Activated B cell treated with CpG ODN at 0.5 μM for 24 hours (primary cell): ENCODE measurements at regions of chr14 and their contacts with region 1.

Region 1: GRCh38 chr14:24036169-24036962 is 15.4 kb upstream of the CARMIL3 start:
- DNase-seq: peak; percentile 50
- ATAC-seq: peak; percentile 76
- H3K4me3 Mint-ChIP-seq: peak overlapping the region; percentile 89
- H3K27ac Mint-ChIP-seq: peak overlapping the region; percentile 62
- H3K4me1 Mint-ChIP-seq: peaks cover 7% of the 10 kb centered on the region
- H3K27me3 Mint-ChIP-seq: no peaks in the 10 kb centered on the region
- CTCF ChIP-seq: no peak

Region 2: DNA sequence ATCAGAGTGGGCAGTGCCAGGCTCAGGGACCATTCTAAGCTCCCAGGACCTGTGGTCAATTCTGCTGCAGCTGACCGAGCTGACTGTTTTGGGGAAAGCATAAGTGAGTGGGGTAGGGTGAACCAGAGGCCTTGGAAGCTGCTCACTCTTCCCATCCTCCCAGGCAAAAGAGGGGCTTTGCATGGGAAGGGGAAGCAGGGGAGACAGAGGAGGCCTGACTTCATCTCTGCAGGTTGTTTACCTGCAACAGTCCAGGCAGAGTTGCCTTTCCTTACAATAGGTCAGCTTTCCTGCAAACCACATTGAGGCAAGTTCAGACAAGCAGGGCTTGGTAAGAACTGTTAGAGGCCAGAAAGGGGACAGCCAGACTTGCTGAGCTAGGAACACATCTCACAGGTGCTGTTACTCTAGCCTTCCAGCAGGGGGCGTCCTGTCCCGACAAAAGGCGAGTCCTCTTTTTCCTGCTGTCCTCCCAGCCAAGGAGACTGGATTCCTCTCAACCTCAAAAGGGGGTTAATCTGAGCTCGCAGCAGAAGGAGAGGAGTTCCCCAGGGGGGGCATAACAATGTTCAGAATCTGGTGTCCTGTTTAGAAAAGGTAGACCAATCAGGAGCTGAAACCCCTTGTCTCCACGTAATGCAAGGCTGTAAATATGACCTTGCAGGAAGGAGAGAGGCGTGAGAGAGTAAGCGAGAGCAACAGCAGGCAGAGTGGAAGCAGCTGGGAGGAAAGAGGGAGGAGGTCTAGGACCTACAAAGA is 404.5 kb before region 1 on chr14:
- CTCF ChIA-PET with region 1: interaction called, 3 read pairs
- POLR2A ChIA-PET with region 1: no interaction called
- intact Hi-C with region 1: loop called (anchors 2 kb)
- DNase-seq: peak; percentile 47
- ATAC-seq: peak; percentile 52
- H3K4me3 Mint-ChIP-seq: no peak overlapping the region
- H3K27ac Mint-ChIP-seq: no peak overlapping the region
- H3K4me1 Mint-ChIP-seq: peaks cover 4% of the 10 kb centered on the region
- H3K27me3 Mint-ChIP-seq: peaks cover 9% of the 10 kb centered on the region
- CTCF ChIP-seq: peak; percentile 92

Region 3: GRCh38 chr14:23953464-23954278 is 82.7 kb before region 1 on chr14 and contains the start of gene DHRS4:
- CTCF ChIA-PET with region 1: no interaction called
- POLR2A ChIA-PET with region 1: no interaction called
- intact Hi-C with region 1: no loop called
- DNase-seq: peak; percentile 69
- ATAC-seq: peak; percentile 95
- H3K4me3 Mint-ChIP-seq: peak within 1 kb of the TSS; percentile 97
- H3K27ac Mint-ChIP-seq: peak within 1 kb of the TSS; percentile 88
- H3K4me1 Mint-ChIP-seq: peaks cover 28% of the 10 kb centered on the region
- H3K27me3 Mint-ChIP-seq: no peaks in the 10 kb centered on the region
- CTCF ChIP-seq: peak; percentile 62
- total RNA-seq, gene DHRS4: 15.8 and 16.1 TPM in 2 replicates

Region 4: GRCh38 chr14:23984891-23985602 is 51.3 kb before region 1 on chr14:
- CTCF ChIA-PET with region 1: no interaction called
- POLR2A ChIA-PET with region 1: no interaction called
- intact Hi-C with region 1: loop called (anchors 5 kb)
- DNase-seq: no peak
- ATAC-seq: no peak
- H3K4me3 Mint-ChIP-seq: no peak overlapping the region
- H3K27ac Mint-ChIP-seq: no peak overlapping the region
- H3K4me1 Mint-ChIP-seq: peaks cover 24% of the 10 kb centered on the region
- H3K27me3 Mint-ChIP-seq: no peaks in the 10 kb centered on the region
- CTCF ChIP-seq: no peak

Region 5: GRCh38 chr14:24051789-24052655 is 15.7 kb after region 1 on chr14 and contains the start of gene CARMIL3:
- CTCF ChIA-PET with region 1: interaction called, 3 read pairs
- POLR2A ChIA-PET with region 1: no interaction called
- intact Hi-C with region 1: loop called (anchors 2 kb)
- DNase-seq: peak; percentile 69
- ATAC-seq: peak; percentile 86
- H3K4me3 Mint-ChIP-seq: peak within 1 kb of the TSS; percentile 82
- H3K27ac Mint-ChIP-seq: peak within 1 kb of the TSS; percentile 71
- H3K4me1 Mint-ChIP-seq: peaks cover 34% of the 10 kb centered on the region
- H3K27me3 Mint-ChIP-seq: peaks cover 6% of the 10 kb centered on the region
- CTCF ChIP-seq: no peak
- total RNA-seq, gene CARMIL3: 3.5 and 3.9 TPM in 2 replicates

Region 6: GRCh38 chr14:25014440-25014839 is 978.1 kb after region 1 on chr14:
- CTCF ChIA-PET with region 1: no interaction called
- POLR2A ChIA-PET with region 1: no interaction called
- intact Hi-C with region 1: no loop called
- DNase-seq: no peak
- ATAC-seq: no peak
- H3K4me3 Mint-ChIP-seq: no peak overlapping the region
- H3K27ac Mint-ChIP-seq: no peak overlapping the region
- H3K4me1 Mint-ChIP-seq: no peaks in the 10 kb centered on the region
- H3K27me3 Mint-ChIP-seq: peaks cover 7% of the 10 kb centered on the region
- CTCF ChIP-seq: no peak